Activated CD4-positive, alpha-beta T cell treated with anti-CD3 and anti-CD28 coated beads, Interleukin-2, amount 10 ng/mL, durations not matched to agents 7 days and 5 days (primary cell): ENCODE measurements at regions of chr6 and their contacts with region 1.

Region 1: DNA sequence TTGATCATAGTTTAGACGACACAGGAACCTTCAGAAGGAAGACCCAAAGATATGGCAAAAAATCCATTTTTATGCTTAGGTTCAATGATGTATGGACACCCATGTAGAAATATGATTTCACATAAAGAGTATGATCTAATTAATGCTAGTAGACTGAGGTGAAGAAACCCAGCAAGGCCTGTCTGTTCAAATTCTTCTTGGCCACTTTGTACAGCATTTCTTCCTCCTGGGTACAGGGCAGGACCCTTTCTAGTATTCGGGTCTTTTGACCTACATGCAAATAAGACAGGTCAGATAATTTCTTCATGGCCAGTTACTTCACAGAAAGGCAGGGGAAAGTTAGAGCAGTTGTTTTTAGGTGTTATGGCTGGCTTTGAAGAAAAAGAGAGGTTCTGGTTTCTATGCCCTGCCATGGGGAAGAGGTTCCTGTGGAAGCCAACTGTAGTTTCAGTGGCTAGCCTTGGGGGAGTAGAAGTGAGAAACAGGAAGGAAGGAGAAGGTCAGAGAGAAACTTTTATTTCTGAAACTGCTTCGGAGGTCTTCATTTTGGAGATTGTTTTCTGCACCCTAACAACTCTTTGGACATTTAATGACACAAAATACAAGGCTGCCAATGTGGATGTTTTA is 208.3 kb downstream of the PTPRK start:
- DNase-seq: peak; percentile 11
- H3K4me3 Mint-ChIP-seq: no peak overlapping the region
- H3K27ac Mint-ChIP-seq: peak overlapping the region; percentile 67
- H3K4me1 Mint-ChIP-seq: peaks cover 21% of the 10 kb centered on the region
- H3K27me3 Mint-ChIP-seq: no peaks in the 10 kb centered on the region

Region 2: DNA sequence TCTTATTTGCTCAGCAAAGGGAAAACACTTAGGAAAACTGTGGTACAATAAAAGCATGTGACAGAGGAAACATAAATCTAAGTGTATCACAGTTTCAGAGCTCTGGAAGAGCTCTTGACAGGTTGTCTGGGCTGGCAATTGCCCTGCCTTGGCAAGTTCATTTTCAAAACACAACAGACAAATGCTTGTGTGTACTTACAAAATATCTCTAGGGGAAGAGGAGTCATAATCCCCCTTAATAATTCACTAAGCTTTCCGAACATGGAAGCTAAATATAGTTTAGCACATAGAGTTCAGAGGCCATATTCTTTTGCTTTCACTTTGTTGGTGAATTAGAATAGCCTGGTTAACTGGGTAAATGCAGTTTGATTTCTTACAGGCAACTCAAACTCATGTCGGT is 199.6 kb before region 1 on chr6:
- CTCF ChIA-PET with region 1: no interaction called
- POLR2A ChIA-PET with region 1: no interaction called
- DNase-seq: no peak
- H3K4me3 Mint-ChIP-seq: peak overlapping the region; percentile 50
- H3K27ac Mint-ChIP-seq: peak overlapping the region; percentile 66
- H3K4me1 Mint-ChIP-seq: peaks cover 13% of the 10 kb centered on the region
- H3K27me3 Mint-ChIP-seq: no peaks in the 10 kb centered on the region

Region 3: GRCh38 chr6:128252341-128253176 is 59.5 kb before region 1 on chr6:
- CTCF ChIA-PET with region 1: no interaction called
- POLR2A ChIA-PET with region 1: interaction called, 10 read pairs
- DNase-seq: no peak
- H3K4me3 Mint-ChIP-seq: no peak overlapping the region
- H3K27ac Mint-ChIP-seq: no peak overlapping the region
- H3K4me1 Mint-ChIP-seq: peaks cover 17% of the 10 kb centered on the region
- H3K27me3 Mint-ChIP-seq: no peaks in the 10 kb centered on the region

Region 4: GRCh38 chr6:128327890-128328289 is 15.8 kb after region 1 on chr6:
- CTCF ChIA-PET with region 1: interaction called, 10 read pairs
- POLR2A ChIA-PET with region 1: no interaction called
- DNase-seq: peak; percentile 52
- H3K4me3 Mint-ChIP-seq: no peak overlapping the region
- H3K27ac Mint-ChIP-seq: no peak overlapping the region
- H3K4me1 Mint-ChIP-seq: peaks cover 2% of the 10 kb centered on the region
- H3K27me3 Mint-ChIP-seq: no peaks in the 10 kb centered on the region

Region 5: GRCh38 chr6:128339635-128340450 is 27.8 kb after region 1 on chr6:
- CTCF ChIA-PET with region 1: no interaction called
- POLR2A ChIA-PET with region 1: no interaction called
- DNase-seq: no peak
- H3K4me3 Mint-ChIP-seq: no peak overlapping the region
- H3K27ac Mint-ChIP-seq: no peak overlapping the region
- H3K4me1 Mint-ChIP-seq: no peaks in the 10 kb centered on the region
- H3K27me3 Mint-ChIP-seq: no peaks in the 10 kb centered on the region